PC-9 (cell line): ENCODE measurements at regions of chr1 and their contacts with region 1.

Region 1: DNA sequence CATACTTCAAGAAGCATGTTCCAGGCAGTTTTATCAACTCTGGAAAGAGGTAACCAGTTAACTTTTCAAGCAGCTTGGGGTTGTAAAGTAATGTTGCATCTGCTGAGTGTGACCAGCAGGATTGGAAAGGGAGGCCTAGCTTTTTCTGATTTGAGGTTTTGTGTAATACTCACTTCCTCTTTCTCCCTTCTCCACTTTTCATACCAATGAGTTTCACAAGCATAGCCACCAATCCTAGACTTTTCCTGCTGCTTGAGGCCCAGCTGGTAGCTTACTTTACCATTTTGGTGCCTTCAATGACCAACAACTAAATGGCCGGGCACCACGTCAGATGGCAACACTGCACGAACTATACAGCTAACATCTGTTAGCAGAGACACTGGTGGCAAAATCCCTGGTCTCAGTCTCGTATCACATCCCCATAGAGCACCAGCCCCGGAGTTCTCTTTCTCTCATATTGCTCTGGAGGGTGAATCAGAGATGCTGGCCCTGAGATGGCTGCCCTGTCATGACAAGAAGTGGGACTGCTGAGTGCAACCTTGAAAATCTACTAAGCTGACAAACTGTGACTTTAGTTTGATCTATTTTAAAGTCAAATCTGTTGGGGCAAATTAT is 14.8 kb upstream of the GPR88 start:
- DNase-seq: no peak
- H3K4me3 ChIP-seq: no peak overlapping the region
- H3K27ac ChIP-seq: no peak overlapping the region
- H3K4me1 ChIP-seq: no peaks in the 10 kb centered on the region
- H3K27me3 ChIP-seq: no peaks in the 10 kb centered on the region
- CTCF ChIP-seq: no peak

Region 2: DNA sequence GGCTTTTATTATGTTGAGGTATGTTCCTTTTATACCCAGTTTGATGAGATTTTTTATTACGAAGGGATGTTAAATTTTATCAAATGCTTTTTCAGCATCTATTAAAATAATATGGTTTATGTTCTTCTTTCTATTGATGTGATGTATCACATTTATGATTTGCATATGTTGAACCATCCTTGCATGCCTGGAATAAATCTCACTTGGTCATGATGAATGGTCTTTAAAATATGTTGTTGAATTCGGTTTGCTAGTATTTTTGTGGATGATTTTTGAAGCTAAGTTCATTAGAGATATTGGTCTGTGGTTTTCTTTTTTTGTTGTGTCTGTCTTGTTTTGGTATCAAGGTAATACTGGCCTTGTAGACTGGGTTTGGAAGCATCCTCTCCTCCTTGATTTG is 28.9 kb after region 1 on chr1:
- CTCF ChIA-PET with region 1: no interaction called
- POLR2A ChIA-PET with region 1: no interaction called
- intact Hi-C with region 1: no loop called
- DNase-seq: no peak
- H3K4me3 ChIP-seq: no peak overlapping the region
- H3K27ac ChIP-seq: no peak overlapping the region
- H3K4me1 ChIP-seq: no peaks in the 10 kb centered on the region
- H3K27me3 ChIP-seq: no peaks in the 10 kb centered on the region
- CTCF ChIP-seq: no peak

Region 3: GRCh38 chr1:100746542-100746932 is 223.4 kb after region 1 on chr1:
- CTCF ChIA-PET with region 1: no interaction called
- POLR2A ChIA-PET with region 1: interaction called, 13 read pairs
- intact Hi-C with region 1: no loop called
- DNase-seq: no peak
- H3K4me3 ChIP-seq: no peak overlapping the region
- H3K27ac ChIP-seq: no peak overlapping the region
- H3K4me1 ChIP-seq: no peaks in the 10 kb centered on the region
- H3K27me3 ChIP-seq: no peaks in the 10 kb centered on the region
- CTCF ChIP-seq: no peak